Naive thymus-derived CD4-positive, alpha-beta T cell (primary cell): ENCODE measurements at regions of chr6 and their contacts with region 1.

Region 1: DNA sequence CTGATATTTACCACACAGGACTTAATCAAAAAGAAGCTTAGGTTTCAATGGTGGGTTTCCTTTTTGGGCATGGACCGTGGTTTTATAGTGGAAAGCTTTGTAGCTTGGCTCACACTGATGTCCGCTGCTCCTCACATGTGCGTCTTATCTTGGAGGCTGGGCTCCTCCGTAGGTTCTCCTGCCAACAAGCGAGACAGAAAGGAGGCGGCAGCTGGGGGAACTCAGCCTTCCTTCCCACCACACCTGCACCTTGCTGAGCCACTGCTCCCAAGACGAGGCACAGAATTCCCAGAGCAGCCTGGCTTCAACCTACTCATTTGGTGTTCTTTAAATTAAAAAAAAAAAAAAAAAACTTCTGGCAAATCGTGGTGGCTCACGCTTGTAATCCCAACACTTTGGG is 235.5 kb upstream of the QKI start:
- DNase-seq: no peak
- ATAC-seq: no peak
- H3K4me3 ChIP-seq: no peak overlapping the region
- H3K4me3 Mint-ChIP-seq: no peak overlapping the region
- H3K27ac ChIP-seq: no peak overlapping the region
- H3K27ac Mint-ChIP-seq: no peak overlapping the region
- H3K4me1 ChIP-seq: no peaks in the 10 kb centered on the region
- H3K4me1 Mint-ChIP-seq: no peaks in the 10 kb centered on the region
- H3K27me3 ChIP-seq: no peaks in the 10 kb centered on the region
- H3K27me3 Mint-ChIP-seq: peaks cover 0 to 29% (median 12%) of the 10 kb centered on the region in 5 donors

Region 2: DNA sequence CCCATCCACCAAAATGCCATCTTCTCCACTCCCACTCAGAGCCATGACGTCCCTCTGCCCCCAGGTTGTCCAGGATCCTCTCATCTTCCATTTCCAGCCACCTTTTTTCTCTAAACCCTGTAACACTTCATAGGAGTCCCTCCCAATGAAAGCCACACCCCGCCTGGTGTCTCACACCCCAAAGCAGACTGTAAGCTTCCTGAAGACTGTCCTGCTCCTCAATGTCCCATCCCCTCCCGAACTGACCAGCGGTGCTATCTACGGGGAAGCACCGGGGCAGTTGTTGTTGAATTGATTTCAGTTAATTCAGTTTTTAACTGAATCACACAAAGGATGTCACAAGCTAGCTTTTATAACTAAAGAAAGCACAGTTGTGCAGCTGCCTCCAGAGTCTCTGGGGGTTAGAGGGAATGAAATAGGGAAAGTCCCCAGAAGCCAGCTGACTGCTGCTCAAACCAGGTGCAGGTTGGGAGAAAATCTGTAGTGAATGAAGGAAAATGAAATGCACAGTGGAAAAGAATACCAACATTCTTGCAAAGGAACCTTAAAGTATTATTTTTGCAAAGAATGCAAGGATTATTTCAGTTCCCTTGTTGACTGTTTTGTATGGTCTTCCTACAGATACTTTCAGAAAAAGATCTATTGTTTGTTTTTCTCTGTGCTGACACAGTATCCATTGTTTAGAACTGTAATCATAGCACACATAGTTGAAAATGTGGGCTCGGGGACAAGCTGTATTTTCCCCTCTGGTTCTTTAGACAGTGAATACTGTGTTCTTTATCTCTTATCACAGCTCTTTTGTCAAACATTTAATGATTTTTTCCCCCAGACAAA is 12.9 kb after region 1 on chr6:
- CTCF ChIA-PET with region 1: no interaction called
- POLR2A ChIA-PET with region 1: no interaction called
- intact Hi-C with region 1: no loop called
- DNase-seq: no peak
- ATAC-seq: no peak
- H3K4me3 ChIP-seq: no peak overlapping the region
- H3K4me3 Mint-ChIP-seq: no peak overlapping the region
- H3K27ac ChIP-seq: no peak overlapping the region
- H3K27ac Mint-ChIP-seq: no peak overlapping the region
- H3K4me1 ChIP-seq: no peaks in the 10 kb centered on the region
- H3K4me1 Mint-ChIP-seq: no peaks in the 10 kb centered on the region
- H3K27me3 ChIP-seq: no peaks in the 10 kb centered on the region
- H3K27me3 Mint-ChIP-seq: peaks cover 0 to 21% (median 10%) of the 10 kb centered on the region in 5 donors

Region 3: GRCh38 chr6:163209005-163209404 is 29.9 kb after region 1 on chr6:
- CTCF ChIA-PET with region 1: no interaction called
- POLR2A ChIA-PET with region 1: no interaction called
- intact Hi-C with region 1: loop called in 1 of 2 experiments (anchors 1 kb)
- DNase-seq: no peak
- ATAC-seq: no peak
- H3K4me3 ChIP-seq: no peak overlapping the region
- H3K4me3 Mint-ChIP-seq: no peak overlapping the region
- H3K27ac ChIP-seq: no peak overlapping the region
- H3K27ac Mint-ChIP-seq: no peak overlapping the region
- H3K4me1 ChIP-seq: no peaks in the 10 kb centered on the region
- H3K4me1 Mint-ChIP-seq: no peaks in the 10 kb centered on the region
- H3K27me3 ChIP-seq: no peaks in the 10 kb centered on the region
- H3K27me3 Mint-ChIP-seq: peaks cover 0 to 33% (median 10%) of the 10 kb centered on the region in 5 donors

Region 4: DNA sequence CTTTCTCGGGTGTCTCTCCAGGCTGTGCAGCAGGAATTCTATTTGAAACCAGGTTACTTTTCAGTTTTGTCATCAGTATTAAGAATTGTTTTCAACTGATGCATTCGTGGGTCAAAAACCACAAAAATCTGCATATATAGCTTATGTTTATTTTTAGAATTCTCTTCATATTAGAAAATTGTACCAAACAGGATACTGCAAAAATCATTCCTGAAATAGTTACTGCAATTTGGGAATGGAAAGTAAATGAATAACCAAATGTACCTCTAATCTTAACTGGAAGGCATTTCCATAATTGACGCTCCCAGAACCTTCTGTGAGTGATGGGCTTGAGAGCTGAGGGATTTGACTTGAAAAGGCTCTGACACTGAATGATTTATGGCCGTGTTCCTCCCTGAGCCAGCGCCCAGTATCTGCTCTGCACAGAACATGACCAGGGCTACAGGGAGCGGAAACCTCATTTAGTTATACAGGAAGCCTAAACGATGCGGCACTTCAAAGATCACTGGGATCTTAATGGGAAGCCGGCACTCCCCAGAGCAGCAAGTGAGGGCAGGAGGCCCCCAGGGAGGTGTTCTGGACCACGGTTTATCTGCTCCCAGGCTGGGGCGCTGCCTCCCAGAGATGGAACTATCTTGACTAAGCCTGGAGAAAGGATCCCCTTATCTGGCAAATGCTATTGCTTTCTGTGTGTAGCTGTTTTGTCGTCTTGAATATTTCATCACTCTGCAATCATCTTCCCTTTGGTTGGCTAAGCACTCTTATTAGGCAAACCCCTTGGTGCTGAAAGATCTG is 681.4 kb after region 1 on chr6:
- CTCF ChIA-PET with region 1: no interaction called
- POLR2A ChIA-PET with region 1: no interaction called
- intact Hi-C with region 1: no loop called
- DNase-seq: no peak
- ATAC-seq: no peak
- H3K4me3 ChIP-seq: no peak overlapping the region
- H3K4me3 Mint-ChIP-seq: no peak overlapping the region
- H3K27ac ChIP-seq: no peak overlapping the region
- H3K27ac Mint-ChIP-seq: no peak overlapping the region
- H3K4me1 ChIP-seq: no peaks in the 10 kb centered on the region
- H3K4me1 Mint-ChIP-seq: peaks cover 0 to 6% (median 0%) of the 10 kb centered on the region in 7 donors
- H3K27me3 ChIP-seq: no peaks in the 10 kb centered on the region
- H3K27me3 Mint-ChIP-seq: peaks cover 12 to 33% (median 28%) of the 10 kb centered on the region in 5 donors